RWPE1 (cell line): ENCODE measurements at regions of chr9 and their contacts with region 1.

Region 1: GRCh38 chr9:94014065-94014654 is 59.0 kb upstream of the BARX1 start:
- DNase-seq: peak; percentile 73
- H3K27ac ChIP-seq: no peak overlapping the region
- CTCF ChIP-seq: peak; percentile 87

Region 2: GRCh38 chr9:94002316-94003140 is 11.6 kb before region 1 on chr9:
- CTCF ChIA-PET with region 1: interaction called, 10 read pairs
- POLR2A ChIA-PET with region 1: no interaction called
- DNase-seq: peak; percentile 48
- H3K27ac ChIP-seq: no peak overlapping the region
- CTCF ChIP-seq: peak; percentile 69

Region 3: DNA sequence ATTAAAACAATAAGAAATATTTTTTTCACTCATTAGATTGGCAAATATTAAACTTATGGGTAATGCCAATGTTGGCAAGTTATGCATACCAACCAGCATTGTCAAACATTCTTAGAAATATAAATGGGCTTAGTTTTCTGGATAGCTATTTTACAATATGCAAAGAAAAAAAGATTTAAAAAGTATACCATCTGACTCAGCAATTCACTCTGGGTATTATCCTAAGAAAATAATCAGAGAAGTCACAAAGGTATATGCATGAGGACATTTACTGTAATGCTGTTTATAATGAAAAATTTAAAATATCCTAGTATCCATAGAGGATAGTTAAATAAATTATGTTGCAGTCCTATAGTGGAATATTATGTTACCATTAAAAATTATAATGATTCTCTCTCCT is 12.7 kb after region 1 on chr9:
- CTCF ChIA-PET with region 1: interaction called, 13 read pairs
- POLR2A ChIA-PET with region 1: no interaction called
- DNase-seq: no peak
- H3K27ac ChIP-seq: no peak overlapping the region
- CTCF ChIP-seq: no peak

Region 4: DNA sequence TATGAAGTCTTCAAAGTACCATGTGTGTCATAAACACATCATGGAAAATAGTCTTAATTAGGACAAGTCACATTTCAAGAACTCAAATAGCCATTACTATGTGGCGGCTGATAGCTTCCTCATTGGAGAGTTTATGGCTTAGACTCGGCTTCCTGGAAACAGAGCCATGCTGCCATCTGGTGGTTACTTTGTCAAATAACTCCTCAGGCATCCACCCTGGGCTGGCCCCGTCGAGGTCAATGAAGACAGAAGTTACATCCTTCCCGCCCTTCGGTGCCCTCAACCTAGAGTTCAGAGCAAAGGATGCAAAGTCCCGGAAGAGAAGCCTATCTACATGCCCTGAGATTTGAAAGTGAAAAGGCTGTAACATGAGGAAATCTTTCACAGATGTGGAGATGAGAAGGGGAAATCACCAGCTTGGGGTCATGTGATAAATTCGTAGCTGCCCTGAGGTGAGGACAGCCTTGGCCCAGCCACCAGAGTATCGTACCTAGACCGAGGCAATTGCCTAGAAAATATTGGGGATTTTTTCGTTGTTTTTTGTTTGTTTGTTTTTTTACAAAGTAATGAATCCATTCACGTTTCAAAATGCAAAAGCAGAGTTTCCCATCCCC is 199.5 kb after region 1 on chr9:
- CTCF ChIA-PET with region 1: interaction called, 68 read pairs
- POLR2A ChIA-PET with region 1: no interaction called
- DNase-seq: peak; percentile 94
- H3K27ac ChIP-seq: no peak overlapping the region
- CTCF ChIP-seq: peak; percentile 97